ENCODE measurements at regions of chr1 and their contacts with region 1.

Region 1: DNA sequence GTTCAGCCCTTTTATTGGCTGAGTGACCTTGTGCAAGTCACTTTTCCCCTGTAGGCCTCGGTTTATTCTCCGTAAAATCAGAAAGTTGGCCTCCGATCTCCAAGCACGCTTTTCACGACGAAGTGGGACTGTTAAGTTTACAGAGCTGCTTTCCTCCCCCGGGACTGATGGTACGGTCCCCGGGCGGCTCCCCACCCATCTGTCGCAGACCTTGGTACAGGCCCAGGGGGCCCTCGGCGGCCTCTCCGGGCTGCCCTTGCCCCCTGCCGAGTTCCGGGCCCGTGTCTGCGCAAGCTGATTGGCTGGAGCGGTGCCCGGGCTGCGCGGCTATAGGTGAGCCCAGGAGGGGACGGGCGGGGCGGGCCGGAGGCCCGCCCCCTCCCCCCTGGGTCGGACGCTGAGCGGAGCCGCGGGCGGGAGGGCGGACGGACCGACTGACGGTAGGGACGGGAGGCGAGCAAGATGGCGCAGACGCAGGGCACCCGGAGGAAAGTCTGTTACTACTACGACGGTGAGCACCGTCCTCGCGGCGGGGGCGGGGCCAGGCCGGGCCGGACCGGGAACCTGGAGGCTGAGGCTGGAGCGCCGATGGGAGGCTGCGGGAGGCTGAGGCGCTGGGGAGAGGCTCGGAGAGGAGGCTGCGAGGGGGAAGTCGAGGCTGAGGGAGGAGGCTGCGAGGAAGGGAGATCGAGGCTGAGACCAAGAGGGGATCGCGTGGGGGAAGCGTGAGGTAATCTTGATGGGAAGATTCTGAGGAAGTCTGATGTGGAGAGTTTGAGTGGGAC is at the start of gene HDAC1:
- DNase-seq: peak; percentile 98
- H3K4me3 Mint-ChIP-seq: peak within 1 kb of the TSS; percentile 100
- H3K27ac Mint-ChIP-seq: peak within 1 kb of the TSS; percentile 93
- H3K4me1 Mint-ChIP-seq: peaks cover 46% of the 10 kb centered on the region
- H3K27me3 Mint-ChIP-seq: no peaks in the 10 kb centered on the region
- total RNA-seq, gene HDAC1: 136 to 139 TPM

Region 2: DNA sequence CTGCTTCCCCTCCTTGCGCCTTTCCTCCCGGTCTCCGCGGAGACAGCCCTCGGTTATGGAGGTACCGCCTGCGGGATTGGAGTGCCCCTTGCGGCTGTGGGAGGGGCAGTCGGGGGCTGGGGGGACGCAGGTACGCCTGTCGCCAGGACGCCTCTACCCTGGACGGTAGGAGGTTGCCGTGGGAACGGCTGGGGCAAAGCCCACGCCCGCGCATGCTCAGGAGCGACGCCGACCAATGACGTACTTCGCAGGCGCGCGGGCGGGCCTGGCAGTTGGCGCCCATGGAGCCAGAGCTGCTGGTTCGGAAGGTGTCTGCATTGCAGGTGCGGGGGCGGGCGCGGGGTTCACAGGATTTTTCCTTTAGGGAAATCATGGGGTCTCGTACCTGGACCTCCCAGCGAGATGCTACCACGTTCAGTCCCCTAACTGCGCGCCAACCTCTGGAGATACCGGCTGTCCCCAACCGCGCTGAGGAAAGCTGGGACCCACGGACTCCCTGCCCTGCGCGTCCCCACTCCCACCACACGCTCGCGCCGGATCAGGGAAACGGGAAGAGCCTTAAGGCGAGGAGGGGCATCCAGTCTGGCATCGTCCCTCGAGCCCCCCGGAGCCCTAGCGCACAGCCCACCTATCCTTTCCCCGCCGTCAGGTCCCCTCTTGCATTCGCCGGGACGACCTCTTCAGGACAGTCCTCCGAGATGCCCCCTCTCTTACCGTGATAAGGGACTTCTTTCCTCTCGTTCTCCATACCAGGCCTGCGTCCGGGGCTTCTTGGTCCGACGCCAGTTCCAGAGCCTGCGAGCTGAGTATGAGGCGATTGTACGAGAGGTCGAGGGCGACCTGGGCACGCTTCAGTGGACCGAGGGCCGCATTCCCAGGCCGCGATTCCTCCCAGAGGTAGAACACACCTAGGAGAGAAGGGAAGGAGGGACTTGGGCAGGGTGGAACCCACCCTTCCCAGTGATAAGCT is 86.2 kb before region 1 on chr1 and contains the start of gene IQCC:
- CTCF ChIA-PET with region 1: no interaction called
- POLR2A ChIA-PET with region 1: no interaction called
- intact Hi-C with region 1: no loop called
- DNase-seq: peak; percentile 92
- H3K4me3 Mint-ChIP-seq: peak within 1 kb of the TSS; percentile 89
- H3K27ac Mint-ChIP-seq: peak within 1 kb of the TSS; percentile 58
- H3K4me1 Mint-ChIP-seq: peaks cover 32% of the 10 kb centered on the region
- H3K27me3 Mint-ChIP-seq: no peaks in the 10 kb centered on the region
- total RNA-seq, gene IQCC: 4.5 to 5.2 TPM

Region 3: DNA sequence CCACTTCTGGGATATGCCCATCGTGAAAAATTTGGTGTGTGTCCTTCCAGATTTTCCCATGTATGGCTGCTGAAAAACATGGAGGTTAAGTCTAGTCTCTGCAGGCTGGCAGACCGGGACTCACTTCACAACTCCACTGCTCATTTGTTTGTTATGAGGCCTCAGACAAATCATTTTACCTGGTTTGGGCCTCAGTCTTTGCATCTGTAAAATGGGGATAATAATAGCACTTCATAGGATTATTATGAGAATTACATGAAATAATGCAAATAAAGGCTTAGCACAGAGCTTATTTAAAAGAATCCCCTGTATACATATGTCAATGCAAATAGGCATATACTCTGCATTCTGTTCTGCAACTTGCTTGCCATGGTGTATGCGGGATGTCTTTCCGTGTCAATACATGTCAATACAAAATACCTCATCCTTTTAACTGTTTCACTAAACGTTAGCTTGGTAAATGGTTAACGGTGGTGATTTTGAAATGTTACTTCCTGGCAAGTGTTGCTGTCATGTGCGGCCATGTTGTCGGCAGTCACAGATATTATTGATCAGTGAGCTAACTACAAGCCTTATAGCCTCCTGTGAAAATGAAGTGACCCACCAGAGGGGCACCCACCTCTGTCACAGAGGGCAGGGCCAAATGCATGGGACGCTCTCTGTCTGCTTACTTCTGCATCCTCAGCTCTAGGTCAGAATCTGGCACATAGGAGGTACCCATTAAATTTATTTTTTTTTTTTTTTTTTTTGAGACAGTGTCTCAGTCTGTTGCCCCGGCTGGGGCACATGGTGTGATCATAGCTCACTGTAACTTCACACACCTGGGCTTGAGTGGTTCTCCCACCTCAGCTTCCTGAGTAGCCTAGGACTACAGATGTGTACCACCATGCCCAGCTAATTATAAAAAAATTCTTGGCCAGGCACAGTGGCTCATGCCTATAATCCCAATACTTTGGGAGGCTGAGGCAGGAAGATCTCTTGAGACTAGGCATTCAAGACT is 36.5 kb before region 1 on chr1:
- CTCF ChIA-PET with region 1: interaction called, 29 read pairs
- POLR2A ChIA-PET with region 1: interaction called, 16 read pairs
- intact Hi-C with region 1: loop called (anchors 2 kb)
- DNase-seq: peak; percentile 53
- H3K4me3 Mint-ChIP-seq: peak overlapping the region; percentile 77
- H3K27ac Mint-ChIP-seq: peak overlapping the region; percentile 93
- H3K4me1 Mint-ChIP-seq: peaks cover 42% of the 10 kb centered on the region
- H3K27me3 Mint-ChIP-seq: no peaks in the 10 kb centered on the region

Region 4: DNA sequence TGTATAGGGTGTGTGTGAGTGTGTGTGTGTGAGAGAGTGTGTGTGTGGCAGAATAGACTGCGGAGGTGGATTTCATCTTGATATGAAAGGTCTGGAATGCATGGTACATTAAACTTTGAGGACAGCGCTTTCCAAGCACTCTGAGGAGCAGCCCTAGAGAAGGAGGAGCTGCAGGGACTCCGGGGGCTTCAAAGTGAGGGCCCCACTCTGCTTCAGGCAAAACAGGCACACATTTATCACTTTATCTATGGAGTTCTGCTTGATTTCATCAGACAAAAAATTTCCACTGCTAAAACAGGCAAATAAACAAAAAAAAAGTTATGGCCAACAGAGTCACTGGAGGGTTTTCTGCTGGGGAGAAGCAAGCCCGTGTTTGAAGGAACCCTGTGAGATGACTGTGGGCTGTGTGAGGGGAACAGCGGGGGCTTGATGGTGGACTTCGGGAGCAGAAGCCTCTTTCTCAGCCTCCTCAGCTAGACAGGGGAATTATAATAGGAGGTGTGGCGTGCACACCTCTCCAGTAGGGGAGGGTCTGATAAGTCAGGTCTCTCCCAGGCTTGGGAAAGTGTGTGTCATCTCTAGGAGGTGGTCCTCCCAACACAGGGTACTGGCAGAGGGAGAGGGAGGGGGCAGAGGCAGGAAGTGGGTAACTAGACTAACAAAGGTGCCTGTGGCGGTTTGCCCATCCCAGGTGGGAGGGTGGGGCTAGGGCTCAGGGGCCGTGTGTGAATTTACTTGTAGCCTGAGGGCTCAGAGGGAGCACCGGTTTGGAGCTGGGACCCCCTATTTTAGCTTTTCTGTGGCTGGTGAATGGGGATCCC is 18.3 kb before region 1 on chr1:
- CTCF ChIA-PET with region 1: interaction called, 3 read pairs
- POLR2A ChIA-PET with region 1: interaction called, 4 read pairs
- intact Hi-C with region 1: loop called (anchors 2 kb)
- DNase-seq: peak; percentile 90
- H3K4me3 Mint-ChIP-seq: peak overlapping the region; percentile 42
- H3K27ac Mint-ChIP-seq: peak overlapping the region; percentile 90
- H3K4me1 Mint-ChIP-seq: peaks cover 46% of the 10 kb centered on the region
- H3K27me3 Mint-ChIP-seq: no peaks in the 10 kb centered on the region

Region 5: DNA sequence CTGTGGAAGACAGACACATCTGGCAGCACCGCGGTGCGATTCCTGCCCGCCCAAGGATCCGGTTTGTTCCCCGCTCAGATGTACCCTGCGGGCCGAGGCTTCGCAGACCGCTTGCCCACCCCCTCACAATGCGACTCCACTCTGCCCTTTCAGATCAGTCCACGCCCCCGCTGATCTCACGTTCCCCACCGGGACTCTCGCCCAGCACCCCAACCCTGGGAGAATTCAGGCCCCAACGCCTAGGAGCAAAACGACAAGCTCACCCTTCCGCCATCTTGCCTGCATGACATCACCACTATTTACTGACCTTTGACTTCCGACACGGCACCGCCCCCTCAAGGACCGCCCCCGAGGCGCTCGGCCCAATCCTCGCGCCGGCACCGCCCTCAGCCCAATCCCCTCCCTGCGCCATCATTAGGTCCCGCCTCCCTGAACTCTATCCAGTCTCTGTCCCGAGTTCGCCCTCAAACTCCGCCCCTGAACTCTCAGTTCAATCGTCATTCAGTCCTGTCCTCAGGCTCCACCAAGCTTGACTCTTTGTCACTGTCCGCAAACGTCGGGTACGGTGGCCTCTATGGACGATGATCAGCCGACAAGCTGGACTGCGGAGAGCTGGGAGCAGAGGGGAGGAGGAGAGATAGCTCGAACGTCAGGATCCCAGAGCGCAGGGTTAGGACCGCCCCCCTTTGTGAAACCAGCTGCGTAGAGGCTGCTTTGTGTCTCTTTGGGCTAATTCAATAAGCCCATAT is 102.4 kb after region 1 on chr1 and contains the start of gene BSDC1:
- CTCF ChIA-PET with region 1: no interaction called
- POLR2A ChIA-PET with region 1: interaction called, 3 read pairs
- intact Hi-C with region 1: loop called (anchors 1 kb)
- DNase-seq: peak; percentile 99
- H3K4me3 Mint-ChIP-seq: peak within 1 kb of the TSS; percentile 94
- H3K27ac Mint-ChIP-seq: peak within 1 kb of the TSS; percentile 90
- H3K4me1 Mint-ChIP-seq: peaks cover 22% of the 10 kb centered on the region
- H3K27me3 Mint-ChIP-seq: no peaks in the 10 kb centered on the region
- total RNA-seq, gene BSDC1: 32.1 to 33.2 TPM

Measured in activated CD4-positive, alpha-beta memory T cell treated with anti-CD3 and anti-CD28 coated beads for 36 hours (primary cell).